CD4-positive, alpha-beta T cell (primary cell): ENCODE measurements at regions of chr1 and their contacts with region 1.

Region 1: DNA sequence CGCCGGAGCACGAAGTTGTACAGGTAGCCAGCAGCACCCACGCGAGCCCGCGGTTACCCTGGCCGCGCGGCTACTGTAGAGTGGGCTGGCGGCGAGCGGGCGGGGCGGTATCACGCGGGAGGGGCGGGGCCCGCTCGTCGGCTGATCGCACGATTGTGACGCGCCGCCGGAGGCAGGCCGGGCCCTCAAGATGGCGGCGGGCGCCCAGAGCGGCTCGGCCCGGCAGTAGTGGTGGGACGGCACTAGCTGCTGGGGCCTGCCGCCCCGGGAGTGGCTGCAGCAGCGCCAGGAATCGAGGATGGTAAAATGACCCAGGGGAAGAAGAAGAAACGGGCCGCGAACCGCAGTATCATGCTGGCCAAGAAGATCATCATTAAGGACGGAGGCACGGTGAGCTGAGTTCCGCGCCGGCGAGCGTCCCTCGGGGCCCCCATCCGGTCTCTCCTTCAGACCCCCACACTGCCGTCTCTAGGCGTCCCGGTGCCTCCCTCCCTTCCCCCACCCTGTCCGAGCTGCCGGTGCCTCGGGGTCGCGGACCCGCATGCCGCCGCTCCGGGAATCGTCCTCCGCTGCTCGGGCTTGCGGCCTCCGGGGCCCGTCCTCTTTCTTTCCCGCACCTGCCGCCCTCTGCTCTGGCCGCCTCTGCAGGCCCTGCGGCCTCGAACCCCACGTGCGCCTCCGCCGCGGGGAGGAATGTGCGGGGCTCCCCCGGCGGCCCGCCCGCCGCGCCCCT is 68.3 kb downstream of the SLC35A3 start:
- DNase-seq: peak; percentile 76 to 96 (median 84)
- ATAC-seq: peak; percentile 78
- H3K4me3 ChIP-seq: peak overlapping the region; percentile 91
- H3K4me3 Mint-ChIP-seq: peak overlapping the region; percentile 98
- H3K27ac ChIP-seq: peak overlapping the region; percentile 94 to 98
- H3K27ac Mint-ChIP-seq: peak overlapping the region; percentile 98
- H3K4me1 ChIP-seq: peaks cover 28% of the 10 kb centered on the region
- H3K4me1 Mint-ChIP-seq: peaks cover 58% of the 10 kb centered on the region
- H3K27me3 ChIP-seq: no peaks in the 10 kb centered on the region
- H3K27me3 Mint-ChIP-seq: no peaks in the 10 kb centered on the region
- CTCF ChIP-seq: no peak

Region 2: DNA sequence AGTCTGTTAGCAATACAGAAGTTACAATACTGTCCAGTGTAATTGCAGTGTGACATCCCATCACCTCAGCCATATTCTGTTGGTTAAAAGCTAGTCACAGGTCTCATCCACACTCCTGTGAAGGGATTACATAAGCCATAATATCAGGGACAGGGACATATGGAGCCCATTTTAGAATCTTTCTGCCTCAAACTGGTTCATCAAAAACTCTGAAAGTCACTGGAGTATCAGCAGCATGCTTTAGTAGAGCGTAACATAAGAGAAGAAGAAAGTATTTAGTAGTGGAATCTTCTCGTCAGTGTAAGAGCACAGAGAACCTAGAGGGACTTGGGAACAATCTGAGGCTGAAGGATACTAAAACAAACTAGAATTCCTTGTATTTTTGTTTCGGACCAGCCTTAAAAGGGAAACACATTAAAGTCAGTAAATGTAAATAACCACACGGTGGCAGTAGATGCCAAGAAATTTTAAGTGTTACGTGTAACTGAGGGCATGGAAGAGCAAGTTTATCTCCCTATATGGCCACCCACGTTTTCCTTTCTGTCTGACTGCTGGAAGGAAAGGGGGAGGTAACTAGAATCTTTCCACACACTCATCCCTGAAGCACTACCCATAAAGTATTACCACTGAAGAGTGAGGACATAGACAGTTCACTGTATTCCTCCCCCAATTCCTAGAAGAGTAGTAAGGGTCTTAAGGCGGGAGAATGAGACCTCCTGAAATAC is 229.5 kb before region 1 on chr1:
- CTCF ChIA-PET with region 1: no interaction called
- POLR2A ChIA-PET with region 1: no interaction called
- intact Hi-C with region 1: loop called (anchors 1 to 2 kb)
- DNase-seq: peak in 6 of 14 experiments; percentile 3 to 80 (median 52)
- ATAC-seq: peak; percentile 86
- H3K4me3 ChIP-seq: no peak overlapping the region
- H3K4me3 Mint-ChIP-seq: no peak overlapping the region
- H3K27ac ChIP-seq: no peak overlapping the region
- H3K27ac Mint-ChIP-seq: no peak overlapping the region
- H3K4me1 ChIP-seq: no peaks in the 10 kb centered on the region
- H3K4me1 Mint-ChIP-seq: peaks cover 7% of the 10 kb centered on the region
- H3K27me3 ChIP-seq: peaks cover 5 to 21% of the 10 kb centered on the region in 2 experiments
- H3K27me3 Mint-ChIP-seq: peaks cover 14% of the 10 kb centered on the region
- CTCF ChIP-seq: peak; percentile 86

Region 3: GRCh38 chr1:99969729-99970621 is 68.1 kb before region 1 on chr1 and contains the start of gene SLC35A3:
- CTCF ChIA-PET with region 1: interaction called, 5 read pairs
- POLR2A ChIA-PET with region 1: interaction called, 33 read pairs
- intact Hi-C with region 1: loop called (anchors 2 to 5 kb)
- DNase-seq: peak; percentile 60 to 88 (median 72)
- ATAC-seq: peak; percentile 83
- H3K4me3 ChIP-seq: peak within 1 kb of the TSS; percentile 80
- H3K4me3 Mint-ChIP-seq: peak within 1 kb of the TSS; percentile 100
- H3K27ac ChIP-seq: peak within 1 kb of the TSS; percentile 24 to 71
- H3K27ac Mint-ChIP-seq: peak within 1 kb of the TSS; percentile 97
- H3K4me1 ChIP-seq: peaks cover 11% of the 10 kb centered on the region
- H3K4me1 Mint-ChIP-seq: peaks cover 38% of the 10 kb centered on the region
- H3K27me3 ChIP-seq: no peaks in the 10 kb centered on the region
- H3K27me3 Mint-ChIP-seq: no peaks in the 10 kb centered on the region
- CTCF ChIP-seq: no peak
- total RNA-seq, gene SLC35A3: 20.2 to 24.6 TPM

Region 4: GRCh38 chr1:99992760-99993467 is 45.2 kb before region 1 on chr1:
- CTCF ChIA-PET with region 1: no interaction called
- POLR2A ChIA-PET with region 1: no interaction called
- intact Hi-C with region 1: no loop called
- DNase-seq: no peak
- ATAC-seq: no peak
- H3K4me3 ChIP-seq: no peak overlapping the region
- H3K4me3 Mint-ChIP-seq: no peak overlapping the region
- H3K27ac ChIP-seq: no peak overlapping the region
- H3K27ac Mint-ChIP-seq: no peak overlapping the region
- H3K4me1 ChIP-seq: no peaks in the 10 kb centered on the region
- H3K4me1 Mint-ChIP-seq: no peaks in the 10 kb centered on the region
- H3K27me3 ChIP-seq: no peaks in the 10 kb centered on the region
- H3K27me3 Mint-ChIP-seq: no peaks in the 10 kb centered on the region
- CTCF ChIP-seq: no peak

Region 5: GRCh38 chr1:100452641-100453040 is 414.5 kb after region 1 on chr1:
- CTCF ChIA-PET with region 1: no interaction called
- POLR2A ChIA-PET with region 1: interaction called, 3 read pairs
- intact Hi-C with region 1: loop called in 1 of 2 experiments (anchors 5 kb)
- DNase-seq: peak in 3 of 14 experiments; percentile 83 to 87 (median 86)
- ATAC-seq: peak; percentile 88
- H3K4me3 ChIP-seq: no peak overlapping the region
- H3K4me3 Mint-ChIP-seq: peak overlapping the region; percentile 70
- H3K27ac ChIP-seq: peak overlapping the region; percentile 77 to 90
- H3K27ac Mint-ChIP-seq: peak overlapping the region; percentile 94
- H3K4me1 ChIP-seq: peaks cover 51% of the 10 kb centered on the region
- H3K4me1 Mint-ChIP-seq: peaks cover 93% of the 10 kb centered on the region
- H3K27me3 ChIP-seq: no peaks in the 10 kb centered on the region
- H3K27me3 Mint-ChIP-seq: no peaks in the 10 kb centered on the region
- CTCF ChIP-seq: no peak